Sigmoid colon (tissue), 7 donors: ENCODE measurements at regions of chr11 and their contacts with region 1.

Region 1: DNA sequence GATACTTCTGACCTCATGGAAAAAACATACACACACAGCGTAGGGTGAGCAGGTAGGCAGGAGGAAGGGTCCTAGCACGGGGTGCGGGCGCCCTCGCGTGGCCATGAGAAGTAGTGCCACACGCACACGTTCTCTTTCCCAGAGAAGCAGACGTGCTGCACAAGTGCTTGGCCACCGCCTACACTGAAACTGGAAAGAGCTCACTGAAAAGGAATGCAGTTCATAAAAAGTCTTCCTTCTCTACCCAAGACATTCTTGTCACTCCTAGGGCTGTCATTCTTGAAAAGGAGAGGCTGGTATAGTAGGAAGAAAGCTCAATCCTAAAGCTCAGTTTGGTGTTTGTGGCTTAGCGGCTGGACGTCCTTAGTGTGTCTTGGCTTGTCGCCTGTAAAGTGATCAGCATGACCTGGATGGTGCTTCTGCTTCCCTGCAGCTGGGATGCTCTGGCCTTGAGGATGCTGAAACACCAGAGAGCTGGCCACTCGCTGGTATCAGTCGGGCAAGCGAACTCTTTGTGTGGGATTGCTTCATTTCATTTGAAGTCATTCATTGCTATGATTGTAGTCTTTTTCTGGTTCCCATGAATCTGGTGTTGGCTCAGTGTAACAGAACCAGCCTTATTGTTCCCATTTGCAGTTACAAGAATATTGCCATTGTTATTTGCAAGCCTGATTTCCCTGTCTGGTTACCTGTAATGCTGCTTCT is 303.8 kb downstream of the NTM start:
- DNase-seq: peak; percentile 84
- H3K4me3 ChIP-seq: no peak overlapping the region
- H3K27ac ChIP-seq: peak overlapping the region in 1 of 4 donors; percentile 5
- H3K4me1 ChIP-seq: peaks cover 0 to 4% (median 0%) of the 10 kb centered on the region in 4 donors
- H3K27me3 ChIP-seq: no peaks in the 10 kb centered on the region
- CTCF ChIP-seq: peak; percentile 79 to 96 (median 88)
- EP300 ChIP-seq: no peak
- POLR2A ChIP-seq: no peak

Region 2: GRCh38 chr11:131246663-131247062 is 427.5 kb before region 1 on chr11:
- intact Hi-C with region 1: loop called (anchors 10 kb)
- DNase-seq: no peak
- H3K4me3 ChIP-seq: no peak overlapping the region
- H3K27ac ChIP-seq: no peak overlapping the region
- H3K4me1 ChIP-seq: peaks cover 0 to 37% (median 32%) of the 10 kb centered on the region in 4 donors
- H3K27me3 ChIP-seq: no peaks in the 10 kb centered on the region
- CTCF ChIP-seq: no peak
- EP300 ChIP-seq: no peak
- POLR2A ChIP-seq: no peak

Region 3: GRCh38 chr11:131408025-131408640 is 266.1 kb before region 1 on chr11:
- intact Hi-C with region 1: loop called (anchors 5 kb)
- DNase-seq: no peak
- H3K4me3 ChIP-seq: no peak overlapping the region
- H3K27ac ChIP-seq: no peak overlapping the region
- H3K4me1 ChIP-seq: peaks cover 0 to 15% (median 7%) of the 10 kb centered on the region in 4 donors
- H3K27me3 ChIP-seq: no peaks in the 10 kb centered on the region
- CTCF ChIP-seq: peak in 1 of 4 experiments; percentile 37
- EP300 ChIP-seq: no peak
- POLR2A ChIP-seq: no peak

Region 4: DNA sequence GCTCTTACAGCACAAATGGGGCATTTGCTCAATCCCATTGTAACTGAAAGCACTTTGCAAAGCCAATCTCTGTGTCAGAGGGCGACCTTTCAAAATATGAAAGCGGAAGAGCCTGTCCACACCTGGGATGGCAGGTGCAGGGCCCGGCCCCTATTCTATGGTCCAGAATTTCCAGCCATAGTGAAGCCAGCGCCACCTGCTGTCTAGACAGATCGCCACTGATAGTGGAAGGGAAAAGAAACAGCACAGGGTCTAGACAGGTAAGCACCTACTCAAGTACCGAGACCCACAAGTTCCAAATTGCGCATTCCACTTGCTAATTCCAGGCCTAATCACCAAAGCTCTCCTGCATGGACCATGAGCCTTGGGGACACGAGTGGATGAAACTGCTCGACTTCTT is 162.4 kb before region 1 on chr11:
- intact Hi-C with region 1: loop called (anchors 10 kb)
- DNase-seq: no peak
- H3K4me3 ChIP-seq: no peak overlapping the region
- H3K27ac ChIP-seq: no peak overlapping the region
- H3K4me1 ChIP-seq: no peaks in the 10 kb centered on the region
- H3K27me3 ChIP-seq: no peaks in the 10 kb centered on the region
- CTCF ChIP-seq: peak in 3 of 4 experiments; percentile 38 to 48 (median 42)
- EP300 ChIP-seq: no peak
- POLR2A ChIP-seq: no peak

Region 5: DNA sequence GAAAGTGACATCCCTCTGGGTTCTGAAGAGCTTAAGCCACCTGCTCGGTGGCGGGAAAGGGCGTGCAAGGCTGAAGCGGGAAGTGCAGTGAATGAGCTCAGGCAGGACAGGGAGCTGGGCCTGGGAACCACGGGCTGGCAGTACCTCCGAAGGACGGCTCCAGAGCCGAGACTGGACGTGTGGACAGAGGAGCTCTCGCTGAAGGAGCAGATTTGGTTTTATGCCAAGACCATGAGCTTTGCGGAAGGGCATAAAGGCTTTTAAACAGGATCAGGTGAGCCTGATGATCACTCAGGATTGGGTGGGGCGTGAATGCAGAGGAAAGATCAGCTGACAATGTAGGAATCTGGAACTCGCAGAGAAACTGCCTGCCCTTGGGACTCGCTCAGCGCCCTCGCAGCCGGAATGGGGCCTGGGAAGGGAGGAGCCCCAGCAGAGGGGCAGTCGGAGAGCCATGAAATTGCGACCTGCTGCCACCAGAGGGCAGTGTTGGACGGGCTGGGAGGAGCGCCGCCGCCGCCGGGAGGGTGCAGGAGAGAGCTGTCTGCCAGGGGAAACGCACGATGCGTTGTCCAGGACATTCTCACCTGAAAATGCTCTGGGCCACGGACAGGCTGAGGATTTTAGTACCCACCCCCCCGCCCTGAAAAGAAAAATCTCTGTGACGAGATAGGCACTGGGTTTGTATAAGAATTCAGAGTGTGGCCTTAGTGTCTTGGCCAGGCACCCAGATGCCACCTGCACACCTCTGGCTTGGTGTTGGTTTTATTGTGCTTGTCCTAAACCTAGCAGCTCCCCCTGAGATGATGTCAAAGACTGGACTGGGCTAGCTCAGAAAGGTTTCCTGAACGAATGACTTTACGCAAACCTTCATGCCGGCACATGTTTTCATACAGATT is 20.6 kb after region 1 on chr11:
- intact Hi-C with region 1: no loop called
- DNase-seq: peak; percentile 90
- H3K4me3 ChIP-seq: peak overlapping the region in 2 of 4 donors; percentile 14 to 17
- H3K27ac ChIP-seq: peak overlapping the region in 1 of 4 donors; percentile 12
- H3K4me1 ChIP-seq: peaks cover 0 to 10% (median 9%) of the 10 kb centered on the region in 4 donors
- H3K27me3 ChIP-seq: peaks cover 0 to 14% (median 0%) of the 10 kb centered on the region in 3 donors
- CTCF ChIP-seq: peak; percentile 57 to 95 (median 78)
- EP300 ChIP-seq: no peak
- POLR2A ChIP-seq: no peak

Region 6: DNA sequence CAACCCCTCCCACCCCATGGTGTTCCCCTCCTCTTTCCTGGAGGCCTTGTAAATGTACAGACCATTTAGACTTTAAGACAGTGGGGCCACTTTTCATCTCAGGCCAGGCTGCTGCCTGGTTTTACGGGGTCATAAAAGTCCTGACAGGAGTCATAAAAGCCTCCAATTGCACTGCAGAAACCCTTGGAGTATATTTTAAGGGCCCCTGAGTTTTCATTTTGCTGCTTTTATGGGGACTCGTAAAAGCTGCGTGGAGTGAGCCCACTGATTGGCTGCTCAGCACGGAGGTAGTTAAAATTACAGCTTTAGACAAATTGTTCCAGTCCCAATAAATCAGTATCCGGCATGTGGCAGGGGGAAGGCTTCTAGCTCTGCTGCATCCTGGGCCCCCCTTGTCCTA is 323.8 kb after region 1 on chr11:
- intact Hi-C with region 1: no loop called
- DNase-seq: peak; percentile 68
- H3K4me3 ChIP-seq: no peak overlapping the region
- H3K27ac ChIP-seq: peak overlapping the region in 1 of 4 donors; percentile 20
- H3K4me1 ChIP-seq: peaks cover 5 to 21% (median 19%) of the 10 kb centered on the region in 4 donors
- H3K27me3 ChIP-seq: peaks cover 0 to 8% (median 5%) of the 10 kb centered on the region in 3 donors
- CTCF ChIP-seq: no peak
- EP300 ChIP-seq: peak in 1 of 4 donors; percentile 16
- POLR2A ChIP-seq: no peak